ENCODE measurements at regions of chr2 and their contacts with region 1.

Region 1: GRCh38 chr2:43595603-43596412 is at the start of gene THADA:
- DNase-seq: peak; percentile 98

Region 2: GRCh38 chr2:43576981-43577892 is 18.6 kb before region 1 on chr2:
- CTCF ChIA-PET with region 1: interaction called, 6 read pairs
- POLR2A ChIA-PET with region 1: interaction called, 12 read pairs
- DNase-seq: peak; percentile 41

Region 3: DNA sequence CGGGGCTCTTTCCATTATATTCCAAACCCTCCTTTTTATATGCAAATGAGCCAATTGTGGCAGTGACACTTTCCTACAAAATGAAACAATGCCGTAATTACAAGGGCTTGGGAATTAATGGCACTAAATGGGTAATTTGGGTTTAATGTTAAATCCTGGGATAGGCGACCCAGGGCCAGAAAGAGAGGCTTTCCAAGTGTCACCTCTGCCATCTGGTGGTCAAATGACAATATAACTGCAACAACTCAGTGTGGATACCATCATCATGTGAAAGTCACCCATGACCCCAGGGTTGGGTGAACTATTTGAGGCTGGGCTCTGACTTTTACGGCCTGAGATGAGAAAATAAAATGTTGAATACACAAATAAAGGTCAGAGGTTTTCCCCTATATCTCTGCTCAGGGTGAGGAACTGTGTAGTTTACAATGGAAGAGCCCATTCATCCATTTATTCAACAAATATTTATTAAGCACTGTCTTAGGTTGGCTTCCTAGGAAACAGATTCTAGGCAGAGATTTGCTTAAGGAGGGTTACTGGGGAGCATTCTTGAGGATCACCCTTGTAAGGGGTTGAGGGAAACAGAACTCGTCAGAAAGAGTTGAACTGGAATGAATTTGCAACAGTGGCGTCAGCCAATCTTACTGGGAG is 13.6 kb after region 1 on chr2:
- CTCF ChIA-PET with region 1: interaction called, 9 read pairs
- POLR2A ChIA-PET with region 1: interaction called, 21 read pairs
- DNase-seq: peak; percentile 60

Region 4: DNA sequence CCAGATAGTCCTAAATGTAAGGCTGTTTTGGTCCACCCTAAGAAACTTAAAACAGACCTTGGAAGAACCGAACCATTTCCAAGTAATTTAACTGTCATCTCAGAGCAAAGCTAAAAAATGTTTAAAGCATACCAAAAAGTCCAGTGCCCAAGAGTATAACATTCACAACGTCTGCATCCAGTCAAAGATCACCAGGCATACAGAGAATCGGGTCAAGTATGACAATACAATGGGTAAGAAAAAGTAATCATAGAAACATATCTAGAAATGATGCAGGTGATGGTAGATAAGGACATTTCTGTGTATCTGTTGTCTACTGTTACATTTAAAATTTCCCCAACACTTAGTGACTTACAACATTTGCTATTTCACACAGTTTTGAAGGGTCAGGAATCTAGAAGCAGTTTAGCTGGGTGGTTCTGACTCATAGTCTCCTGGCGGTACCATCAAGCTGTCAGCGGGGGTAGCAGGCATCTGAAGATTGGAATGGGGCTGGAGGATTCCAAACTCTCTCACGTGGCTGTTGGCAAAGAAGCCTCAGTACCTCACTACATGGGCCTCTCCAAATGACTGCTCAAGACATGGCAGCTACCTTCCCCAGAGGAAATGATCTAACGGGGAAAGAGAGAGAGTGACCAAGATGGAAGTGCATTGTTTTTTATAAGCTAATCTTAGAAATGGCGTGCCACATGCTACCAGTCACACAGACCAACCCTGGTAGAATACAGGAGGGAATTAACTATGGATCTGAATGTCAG is 141.5 kb after region 1 on chr2:
- CTCF ChIA-PET with region 1: no interaction called
- POLR2A ChIA-PET with region 1: no interaction called
- DNase-seq: no peak

Region 5: DNA sequence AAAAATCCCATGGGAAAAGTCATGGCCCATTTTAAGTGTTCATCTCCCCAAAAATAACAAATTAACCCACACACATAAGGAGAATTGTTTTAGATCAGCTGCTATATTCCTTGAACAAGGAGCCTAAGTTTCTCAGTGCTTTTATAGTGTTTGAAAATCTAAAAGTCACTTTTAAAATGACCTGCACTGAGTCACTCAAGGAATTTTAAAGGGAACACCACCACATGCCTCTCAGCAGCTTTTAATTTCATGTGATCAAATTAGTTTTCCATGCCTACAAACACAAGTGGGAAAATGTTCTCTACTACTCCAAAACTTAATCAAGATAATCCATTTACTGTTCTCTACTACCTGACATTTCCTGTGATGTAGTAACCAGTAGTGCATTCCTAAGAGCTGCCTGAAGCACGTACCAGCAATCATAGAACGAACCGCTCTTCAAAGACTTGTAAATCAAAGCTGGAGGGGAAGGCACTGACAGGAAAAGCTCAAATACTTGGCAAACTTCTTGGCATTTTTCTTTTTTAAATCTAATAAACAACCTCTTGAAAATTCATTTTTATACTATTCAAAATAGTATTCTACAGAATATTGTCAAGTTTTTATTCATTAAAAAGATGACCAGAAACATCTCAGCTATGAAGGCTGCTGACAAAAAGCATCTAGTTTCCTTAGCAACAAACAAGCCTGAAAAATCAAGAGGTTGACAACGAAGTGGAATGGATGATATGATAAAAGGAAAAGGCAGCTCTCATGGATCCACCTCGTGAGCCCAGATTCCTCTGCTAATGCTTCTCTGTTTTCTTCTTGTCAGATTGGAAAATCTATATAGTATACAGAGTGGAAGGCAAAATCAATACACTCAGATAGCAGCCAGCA is 362.8 kb after region 1 on chr2:
- CTCF ChIA-PET with region 1: no interaction called
- POLR2A ChIA-PET with region 1: no interaction called
- DNase-seq: no peak

Measured in HEK293T (cell line).